Sigmoid colon (tissue), 7 donors: ENCODE measurements at regions of chr10 and their contacts with region 1.

Region 1: DNA sequence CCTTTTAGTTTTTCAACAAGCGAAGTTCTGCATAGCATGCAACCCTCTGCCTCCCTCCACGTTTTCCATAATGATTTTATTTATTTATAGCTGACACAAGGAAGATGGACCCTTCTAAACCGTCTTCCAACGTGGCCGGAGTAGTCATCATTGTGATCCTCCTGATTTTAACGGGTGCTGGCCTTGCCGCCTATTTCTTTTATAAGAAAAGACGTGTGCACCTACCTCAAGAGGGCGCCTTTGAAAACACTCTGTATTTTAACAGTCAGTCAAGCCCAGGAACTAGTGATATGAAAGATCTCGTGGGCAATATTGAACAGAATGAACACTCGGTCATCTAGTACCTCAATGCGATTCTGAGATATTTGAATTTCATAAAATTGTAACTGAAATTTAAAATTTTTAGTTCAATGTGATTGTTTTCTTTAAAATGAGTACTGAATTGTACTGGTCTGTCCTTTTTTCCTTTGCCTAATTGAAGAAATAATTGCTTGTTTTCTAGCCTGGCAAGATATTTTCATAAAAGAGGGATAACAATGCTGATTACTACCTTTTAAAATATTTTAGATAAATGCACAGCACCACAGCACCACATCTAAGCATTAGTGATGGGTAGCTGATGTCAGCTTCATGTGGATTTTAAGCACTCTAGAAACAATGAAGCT is 41.5 kb upstream of the SLC39A12 start:
- DNase-seq: peak; percentile 76
- H3K4me3 ChIP-seq: no peak overlapping the region
- H3K27ac ChIP-seq: no peak overlapping the region
- H3K4me1 ChIP-seq: peaks cover 0 to 28% (median 20%) of the 10 kb centered on the region in 4 donors
- H3K27me3 ChIP-seq: no peaks in the 10 kb centered on the region
- CTCF ChIP-seq: peak in 3 of 4 experiments; percentile 57 to 68 (median 60)
- EP300 ChIP-seq: no peak
- POLR2A ChIP-seq: no peak

Region 2: DNA sequence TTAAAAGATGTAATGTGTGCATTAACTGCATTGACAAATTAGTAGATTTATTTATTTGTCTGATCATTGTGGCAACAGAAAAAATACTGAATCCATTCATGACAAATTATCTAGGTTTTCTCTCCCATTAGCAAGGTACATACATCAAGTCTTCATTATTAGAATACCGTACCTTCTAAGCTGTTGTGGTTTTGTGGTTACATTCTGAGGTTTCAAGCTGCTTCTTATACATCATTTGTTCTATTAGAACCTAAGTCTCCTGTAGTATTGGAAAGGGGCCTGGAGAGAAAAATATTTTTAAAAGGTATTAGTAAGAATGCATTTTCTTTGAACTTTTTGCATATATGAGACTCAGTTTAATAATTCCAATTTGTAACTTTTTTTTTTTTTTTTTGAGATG is 203.6 kb after region 1 on chr10:
- intact Hi-C with region 1: no loop called
- DNase-seq: no peak
- H3K4me3 ChIP-seq: no peak overlapping the region
- H3K27ac ChIP-seq: no peak overlapping the region
- H3K4me1 ChIP-seq: no peaks in the 10 kb centered on the region
- H3K27me3 ChIP-seq: no peaks in the 10 kb centered on the region
- CTCF ChIP-seq: no peak
- EP300 ChIP-seq: no peak
- POLR2A ChIP-seq: no peak

Region 3: GRCh38 chr10:18214691-18215563 is 304.7 kb after region 1 on chr10:
- intact Hi-C with region 1: loop called (anchors 1 kb)
- DNase-seq: peak; percentile 68
- H3K4me3 ChIP-seq: no peak overlapping the region
- H3K27ac ChIP-seq: peak overlapping the region in 2 of 4 donors; percentile 26 to 58
- H3K4me1 ChIP-seq: peaks cover 0 to 81% (median 66%) of the 10 kb centered on the region in 4 donors
- H3K27me3 ChIP-seq: no peaks in the 10 kb centered on the region
- CTCF ChIP-seq: peak; percentile 59 to 82 (median 78)
- EP300 ChIP-seq: no peak
- POLR2A ChIP-seq: no peak